Activated T-helper 2 cell treated with anti-CD3 and anti-CD28 coated beads, Interferon-gamma antibody, Interleukin-2, Interleukin-4, amounts not matched to agents 10 μg/mL and 5 μg/mL and 100 μg/mL, durations not matched to agents 14 hours and 24 hours and 36 hours (primary cell): ENCODE measurements at regions of chr9 and their contacts with region 1.

Region 1: DNA sequence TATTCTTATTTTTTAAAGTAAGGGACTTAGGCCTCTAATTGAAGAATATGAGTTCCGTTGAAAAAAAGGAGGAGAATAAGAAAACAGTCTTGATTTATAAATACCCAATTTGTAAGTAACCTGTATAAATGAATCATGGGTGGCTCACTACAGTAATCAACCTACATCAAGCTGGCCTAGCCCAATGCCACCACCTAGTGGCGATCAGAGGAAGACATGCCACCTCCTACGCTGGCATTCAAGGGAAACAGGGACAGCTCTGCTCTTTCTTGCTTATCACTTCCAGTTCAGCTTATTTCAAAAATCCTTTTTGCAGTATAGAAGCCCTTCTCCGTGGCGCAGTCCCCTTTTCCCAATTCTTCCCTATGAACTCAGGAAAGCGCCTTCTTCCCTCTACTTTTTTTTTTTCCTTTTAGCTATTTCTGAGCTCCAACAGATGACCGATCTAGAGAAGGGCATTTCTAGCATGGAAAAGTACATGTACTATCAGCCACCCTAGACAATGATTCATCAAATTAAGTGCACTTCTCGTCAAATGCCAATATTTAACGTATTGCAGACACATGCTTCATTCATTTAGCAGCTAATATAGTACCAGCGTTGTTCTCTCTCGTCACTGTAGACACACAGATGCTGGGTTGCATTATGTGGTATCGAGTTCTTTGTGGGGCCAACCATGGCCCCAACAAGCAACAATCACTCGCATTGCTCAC is 28.3 kb downstream of the PTPN3 start:
- DNase-seq: peak; percentile 58
- H3K4me3 Mint-ChIP-seq: no peak overlapping the region
- H3K27ac Mint-ChIP-seq: no peak overlapping the region
- H3K4me1 Mint-ChIP-seq: peaks cover 38% of the 10 kb centered on the region
- H3K27me3 Mint-ChIP-seq: peaks cover 13% of the 10 kb centered on the region

Region 2: GRCh38 chr9:109244157-109245132 is 225.4 kb before region 1 on chr9:
- intact Hi-C with region 1: loop called (anchors 1 kb)
- DNase-seq: peak; percentile 50
- H3K4me3 Mint-ChIP-seq: no peak overlapping the region
- H3K27ac Mint-ChIP-seq: no peak overlapping the region
- H3K4me1 Mint-ChIP-seq: no peaks in the 10 kb centered on the region
- H3K27me3 Mint-ChIP-seq: peaks cover 20% of the 10 kb centered on the region

Region 3: DNA sequence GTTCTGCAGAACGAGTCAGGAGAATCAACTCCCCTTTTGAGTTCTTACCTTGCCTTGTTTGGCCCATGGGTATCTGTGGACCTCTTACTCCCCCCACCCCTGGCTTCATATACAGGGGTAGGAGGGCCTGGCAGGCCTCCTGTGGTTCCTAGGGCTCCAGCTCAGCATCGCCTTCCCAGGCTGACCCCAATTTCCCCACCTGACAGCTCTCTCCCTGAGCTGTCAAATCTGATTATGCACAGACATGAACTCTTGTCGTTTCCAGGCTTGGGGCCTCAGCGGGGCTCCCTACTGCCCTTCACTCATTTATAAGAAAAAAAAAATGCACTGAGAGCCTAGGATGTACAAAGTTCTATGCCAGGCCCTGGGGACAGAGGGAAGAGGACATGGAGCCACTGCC is 39.6 kb before region 1 on chr9:
- intact Hi-C with region 1: loop called (anchors 5 kb)
- DNase-seq: no peak
- H3K4me3 Mint-ChIP-seq: no peak overlapping the region
- H3K27ac Mint-ChIP-seq: no peak overlapping the region
- H3K4me1 Mint-ChIP-seq: no peaks in the 10 kb centered on the region
- H3K27me3 Mint-ChIP-seq: peaks cover 10% of the 10 kb centered on the region

Region 4: GRCh38 chr9:109440797-109441287 is 29.0 kb before region 1 on chr9:
- intact Hi-C with region 1: loop called (anchors 1 kb)
- DNase-seq: peak; percentile 60
- H3K4me3 Mint-ChIP-seq: no peak overlapping the region
- H3K27ac Mint-ChIP-seq: peak overlapping the region; percentile 80
- H3K4me1 Mint-ChIP-seq: peaks cover 29% of the 10 kb centered on the region
- H3K27me3 Mint-ChIP-seq: peaks cover 18% of the 10 kb centered on the region

Region 5: DNA sequence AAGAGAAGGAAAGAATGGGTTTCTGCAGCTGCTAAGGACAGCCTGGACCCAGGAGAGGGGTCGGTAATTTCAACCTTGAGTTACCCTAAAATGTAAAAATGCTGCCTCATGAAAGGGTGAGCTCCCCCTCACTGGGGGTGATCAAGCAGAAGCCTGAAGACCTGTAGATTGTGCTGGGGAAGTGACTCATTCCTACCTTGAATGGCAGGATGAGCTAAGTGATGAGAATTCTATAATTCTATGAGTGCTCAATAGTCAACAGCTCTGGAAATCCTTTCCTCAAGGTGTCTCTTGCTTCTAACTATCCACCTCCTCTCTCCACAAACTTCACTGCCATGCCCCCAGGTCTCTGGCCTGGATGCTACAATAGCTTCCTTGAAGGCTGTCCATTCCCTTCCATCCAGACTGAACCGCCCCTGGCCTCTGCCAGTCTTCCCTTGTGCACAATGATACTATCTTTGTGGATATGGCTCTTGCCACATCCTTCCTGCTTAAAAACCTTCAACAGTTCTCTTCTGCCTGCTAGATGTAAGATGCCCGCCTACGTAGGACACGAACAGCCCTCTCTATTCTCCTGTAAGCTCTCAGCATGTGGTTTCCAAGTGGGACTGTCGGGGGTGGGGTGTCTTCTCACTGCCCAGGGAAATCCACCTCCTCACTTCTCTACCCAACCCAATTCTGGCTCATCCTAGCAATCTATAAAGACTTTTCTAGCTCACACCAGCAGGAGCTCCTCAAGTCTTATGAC is 22.3 kb before region 1 on chr9:
- intact Hi-C with region 1: loop called (anchors 1 kb)
- DNase-seq: no peak
- H3K4me3 Mint-ChIP-seq: peak overlapping the region; percentile 10
- H3K27ac Mint-ChIP-seq: peak overlapping the region; percentile 83
- H3K4me1 Mint-ChIP-seq: peaks cover 37% of the 10 kb centered on the region
- H3K27me3 Mint-ChIP-seq: no peaks in the 10 kb centered on the region